ENCODE measurements at regions of chr17 and their contacts with region 1.

Region 1: DNA sequence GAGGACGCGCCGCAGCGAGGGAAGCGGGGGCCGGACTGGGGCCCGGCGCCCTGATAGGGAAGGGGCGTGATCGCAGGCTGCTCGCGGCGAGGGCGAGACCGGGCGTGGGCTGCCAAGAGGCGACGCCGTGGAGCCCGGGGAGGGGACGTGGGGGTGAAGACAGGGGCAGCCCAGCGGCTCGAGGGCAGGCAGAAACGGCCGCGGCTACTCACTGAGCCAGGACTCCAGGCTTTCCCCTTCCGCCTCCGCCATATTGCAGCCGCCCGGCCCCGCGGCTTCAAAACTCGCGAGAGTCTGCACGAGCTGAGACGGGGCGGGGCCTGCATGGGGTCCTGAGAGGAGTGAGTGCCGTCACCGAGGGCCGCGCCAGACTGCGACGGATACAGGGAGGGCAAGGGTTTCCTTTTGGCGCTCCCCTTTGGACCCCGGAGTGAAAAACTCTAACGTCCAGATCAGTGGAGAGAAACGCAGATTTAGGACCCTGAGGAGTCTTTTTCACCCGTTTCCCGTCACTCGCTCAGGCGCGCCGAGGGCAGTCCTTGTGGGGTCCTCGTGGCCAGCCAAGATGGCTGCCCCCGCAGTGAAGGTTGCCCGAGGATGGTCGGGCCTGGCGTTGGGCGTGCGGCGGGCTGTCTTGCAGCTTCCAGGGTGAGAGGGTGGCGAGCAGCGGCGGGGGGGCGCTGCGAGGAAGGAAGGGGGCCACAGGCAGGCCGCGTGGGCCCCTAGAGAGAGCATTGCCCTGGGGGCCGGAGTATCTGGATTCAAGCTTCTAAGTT is at the starts of genes GGA3 and MRPS7:
- DNase-seq: peak; percentile 94
- H3K4me3 Mint-ChIP-seq: peak within 1 kb of the TSS; percentile 96
- H3K27ac Mint-ChIP-seq: peak within 1 kb of the TSS; percentile 97
- H3K4me1 Mint-ChIP-seq: peaks cover 49% of the 10 kb centered on the region
- H3K27me3 Mint-ChIP-seq: no peaks in the 10 kb centered on the region
- total RNA-seq, gene GGA3: 93.4 and 94.3 TPM in 2 replicates
- total RNA-seq, gene MRPS7: 126 and 130 TPM in 2 replicates

Region 2: DNA sequence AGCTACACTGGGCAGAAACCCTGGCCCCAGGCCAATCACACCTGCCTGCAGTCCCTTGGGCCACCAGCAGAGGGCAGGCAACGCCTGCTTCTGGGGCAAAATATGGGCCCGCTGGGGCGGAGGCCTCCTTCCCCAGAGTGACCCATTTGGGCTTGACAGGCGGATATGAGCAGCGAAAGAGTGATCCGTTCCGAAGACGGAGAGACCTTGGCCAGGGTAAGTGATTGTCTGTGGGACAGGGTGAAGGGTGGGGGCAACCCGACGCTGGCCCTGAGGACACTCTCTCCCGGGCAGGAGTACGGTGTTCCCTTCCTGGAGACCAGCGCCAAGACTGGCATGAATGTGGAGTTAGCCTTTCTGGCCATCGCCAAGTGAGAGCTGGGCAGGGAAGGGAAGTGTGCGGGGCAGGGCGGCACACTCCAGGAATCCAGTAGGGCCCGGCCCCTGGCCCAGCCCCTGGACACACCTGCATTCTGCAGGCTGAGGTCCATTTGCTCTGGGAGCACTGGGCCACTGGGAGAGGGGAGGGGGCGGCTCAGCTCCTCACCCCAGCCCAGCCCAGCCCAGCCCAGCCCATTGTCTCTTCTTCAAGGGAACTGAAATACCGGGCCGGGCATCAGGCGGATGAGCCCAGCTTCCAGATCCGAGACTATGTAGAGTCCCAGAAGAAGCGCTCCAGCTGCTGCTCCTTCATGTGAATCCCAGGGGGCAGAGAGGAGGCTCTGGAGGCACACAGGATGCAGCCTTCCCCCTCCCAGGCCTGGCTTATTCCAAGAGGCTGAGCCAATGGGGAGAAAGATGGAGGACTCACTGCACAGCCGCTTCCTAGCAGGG is 516.6 kb before region 1 on chr17:
- intact Hi-C with region 1: no loop called
- DNase-seq: peak; percentile 78
- H3K4me3 Mint-ChIP-seq: peak overlapping the region; percentile 39
- H3K27ac Mint-ChIP-seq: peak overlapping the region; percentile 65
- H3K4me1 Mint-ChIP-seq: peaks cover 71% of the 10 kb centered on the region
- H3K27me3 Mint-ChIP-seq: no peaks in the 10 kb centered on the region

Region 3: DNA sequence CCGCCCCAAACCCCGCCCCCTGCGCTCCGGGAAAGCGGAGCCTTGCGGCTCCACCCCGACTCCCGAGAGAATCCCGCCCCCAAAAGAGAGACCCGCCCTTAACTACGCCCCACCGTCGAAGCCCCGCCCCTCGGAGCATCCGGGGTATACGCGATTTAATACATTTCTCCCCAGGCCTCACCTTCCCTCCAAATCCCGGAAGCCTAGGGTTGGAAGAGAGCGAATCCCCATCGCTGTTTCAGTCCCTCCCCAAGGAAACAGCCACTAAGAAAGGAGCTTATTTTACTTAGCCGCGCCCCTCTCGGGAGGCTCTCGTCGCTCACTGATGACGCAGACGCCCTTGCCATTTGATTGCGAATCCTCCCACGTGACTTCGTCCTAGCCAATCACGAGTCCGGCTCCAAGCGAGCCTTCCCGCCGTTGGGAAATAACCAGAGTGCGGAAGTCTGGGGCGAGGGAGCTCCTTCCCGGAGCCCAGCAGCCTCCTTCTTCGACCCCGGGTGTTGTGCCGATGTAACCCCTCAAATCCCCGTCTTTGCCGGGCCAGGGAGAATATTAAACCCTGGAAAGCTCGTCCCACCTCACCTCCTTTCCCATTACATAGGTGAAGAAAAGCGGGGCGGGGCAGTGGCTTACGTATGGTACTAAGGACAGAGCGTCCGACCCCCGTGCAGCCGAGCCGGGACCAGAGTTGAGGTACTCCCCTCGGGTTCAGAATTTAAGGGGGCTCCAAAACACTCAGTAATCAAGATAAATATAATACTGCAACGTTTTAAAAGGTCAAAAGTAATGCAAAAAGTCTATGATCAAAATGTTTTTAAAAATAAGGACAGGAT is 388.3 kb before region 1 on chr17:
- intact Hi-C with region 1: loop called (anchors 10 kb)
- DNase-seq: peak; percentile 98
- H3K4me3 Mint-ChIP-seq: peak overlapping the region; percentile 89
- H3K27ac Mint-ChIP-seq: peak overlapping the region; percentile 87
- H3K4me1 Mint-ChIP-seq: peaks cover 31% of the 10 kb centered on the region
- H3K27me3 Mint-ChIP-seq: peaks cover 5% of the 10 kb centered on the region

Region 4: GRCh38 chr17:75046582-75047289 is 214.8 kb before region 1 on chr17 and contains the starts of genes ATP5PD and KCTD2:
- intact Hi-C with region 1: loop called (anchors 5 kb)
- DNase-seq: peak; percentile 93
- H3K4me3 Mint-ChIP-seq: peak within 1 kb of the TSS; percentile 100
- H3K27ac Mint-ChIP-seq: peak within 1 kb of the TSS; percentile 98
- H3K4me1 Mint-ChIP-seq: peaks cover 35% of the 10 kb centered on the region
- H3K27me3 Mint-ChIP-seq: no peaks in the 10 kb centered on the region
- total RNA-seq, gene ATP5PD: 152 and 165 TPM in 2 replicates
- total RNA-seq, gene KCTD2: 21.2 and 22.6 TPM in 2 replicates

Region 5: DNA sequence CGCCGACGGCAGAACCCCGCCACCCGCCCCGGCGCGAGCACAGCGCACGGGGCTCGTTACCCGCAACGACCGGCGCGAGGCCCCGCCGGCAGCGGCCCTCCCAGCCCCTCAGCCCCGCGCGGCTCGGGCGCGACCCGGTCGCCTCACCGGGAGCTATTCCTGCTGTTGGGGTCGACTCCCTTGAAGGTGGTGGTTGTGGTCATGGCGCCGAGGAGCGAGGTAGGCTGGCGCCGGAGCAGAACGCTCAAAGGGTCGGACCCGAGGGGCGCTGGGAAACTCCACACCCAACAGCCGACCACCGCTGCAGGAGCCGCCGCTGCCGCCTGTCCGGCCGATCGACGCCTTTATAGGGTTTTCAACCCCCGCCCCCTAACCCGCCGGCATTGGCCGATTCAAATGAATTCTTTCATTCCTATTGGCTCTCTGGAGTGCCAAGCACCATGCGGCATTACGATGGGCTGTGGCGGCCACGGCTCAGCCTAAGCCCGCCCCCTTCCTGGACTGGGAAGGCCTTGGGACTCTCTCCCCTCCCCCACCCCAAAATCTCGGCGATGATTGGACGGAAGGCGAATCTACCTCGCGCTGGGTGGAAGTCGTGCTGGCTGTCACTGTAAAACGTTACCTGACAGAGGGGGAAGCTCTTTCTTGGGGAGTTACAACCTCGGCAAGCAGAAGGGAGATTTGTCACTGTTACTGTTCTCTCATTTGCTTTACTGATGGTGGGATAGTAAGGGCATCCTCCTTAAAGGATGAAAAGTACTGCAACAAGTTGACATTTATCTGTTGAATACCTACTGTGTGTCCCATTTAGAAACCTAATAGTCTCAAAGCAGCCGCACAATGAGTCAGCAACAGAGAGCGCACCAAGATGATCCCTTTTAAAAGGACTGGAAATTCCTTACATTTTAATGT is 107.1 kb before region 1 on chr17 and contains the start of gene JPT1:
- intact Hi-C with region 1: loop called (anchors 1 kb)
- DNase-seq: peak; percentile 97
- H3K4me3 Mint-ChIP-seq: peak within 1 kb of the TSS; percentile 97
- H3K27ac Mint-ChIP-seq: peak within 1 kb of the TSS; percentile 93
- H3K4me1 Mint-ChIP-seq: peaks cover 34% of the 10 kb centered on the region
- H3K27me3 Mint-ChIP-seq: no peaks in the 10 kb centered on the region
- total RNA-seq, gene JPT1: 271 and 299 TPM in 2 replicates

Region 6: GRCh38 chr17:75205037-75205792 is 56.3 kb before region 1 on chr17 and contains the start of gene NUP85:
- intact Hi-C with region 1: loop called (anchors 1 kb)
- DNase-seq: peak; percentile 89
- H3K4me3 Mint-ChIP-seq: peak within 1 kb of the TSS; percentile 98
- H3K27ac Mint-ChIP-seq: peak within 1 kb of the TSS; percentile 99
- H3K4me1 Mint-ChIP-seq: peaks cover 23% of the 10 kb centered on the region
- H3K27me3 Mint-ChIP-seq: no peaks in the 10 kb centered on the region
- total RNA-seq, gene NUP85: 122 and 129 TPM in 2 replicates

Region 7: DNA sequence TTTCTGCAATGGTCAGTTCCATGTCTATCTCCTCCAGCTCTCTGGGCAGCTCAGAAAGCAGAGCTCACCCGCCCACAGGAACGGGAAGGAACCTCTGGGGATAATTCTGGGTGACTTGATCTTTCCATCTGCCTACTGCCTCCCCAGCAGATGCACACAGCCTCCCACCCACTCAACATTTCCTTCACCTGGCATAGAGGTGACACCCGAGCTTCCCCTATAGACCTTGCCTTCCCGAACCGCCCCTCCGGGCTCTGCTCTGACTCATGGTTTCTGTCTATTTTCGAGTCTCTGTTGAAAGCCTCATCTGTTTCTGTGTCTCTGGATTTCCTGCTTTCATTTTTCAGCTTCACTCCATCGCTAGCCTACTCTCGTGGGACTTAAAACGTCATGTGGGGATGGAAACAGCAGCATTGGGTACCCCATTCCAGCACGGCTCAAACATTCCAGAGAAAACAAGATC is 11.5 kb before region 1 on chr17:
- intact Hi-C with region 1: loop called (anchors 1 kb)
- DNase-seq: peak; percentile 64
- H3K4me3 Mint-ChIP-seq: peak overlapping the region; percentile 77
- H3K27ac Mint-ChIP-seq: peak overlapping the region; percentile 92
- H3K4me1 Mint-ChIP-seq: peaks cover 63% of the 10 kb centered on the region
- H3K27me3 Mint-ChIP-seq: no peaks in the 10 kb centered on the region

Region 8: DNA sequence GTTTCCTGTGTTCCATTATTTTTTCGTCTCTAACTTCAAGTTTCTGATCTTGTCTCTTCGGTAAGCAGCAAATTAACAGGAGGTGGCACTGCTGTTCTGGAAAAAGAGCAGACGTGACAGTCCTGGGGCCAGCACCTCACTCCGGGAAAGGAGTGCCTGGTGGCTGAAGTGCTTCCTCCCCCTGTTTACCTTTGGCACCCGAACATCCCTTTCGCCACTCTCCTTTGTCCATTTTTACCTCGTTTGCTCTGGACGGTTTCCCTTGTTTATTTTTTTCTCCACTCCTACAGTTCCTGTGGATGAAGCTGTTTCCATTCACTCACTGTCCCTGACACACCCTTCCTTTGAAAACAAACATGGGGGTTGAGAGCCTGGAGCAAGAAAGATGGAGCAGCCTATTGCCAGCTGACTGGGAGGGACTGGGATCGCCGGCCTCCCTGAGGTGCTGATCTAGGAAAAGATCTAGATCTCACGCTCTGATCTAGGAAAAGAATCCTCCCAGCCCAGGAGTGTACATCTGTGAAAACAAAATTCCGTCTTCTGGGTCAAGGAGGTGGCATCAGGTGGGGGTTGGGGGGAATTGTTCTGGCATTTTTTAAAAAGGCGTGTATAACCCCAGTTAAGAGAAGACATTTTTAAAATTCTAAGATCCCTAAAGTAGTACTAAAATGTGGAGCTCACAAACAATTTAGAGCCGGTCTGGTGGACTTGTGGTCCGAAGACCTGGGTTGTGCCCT is 418.4 kb after region 1 on chr17:
- intact Hi-C with region 1: loop called (anchors 10 kb)
- DNase-seq: no peak
- H3K4me3 Mint-ChIP-seq: no peak overlapping the region
- H3K27ac Mint-ChIP-seq: no peak overlapping the region
- H3K4me1 Mint-ChIP-seq: peaks cover 13% of the 10 kb centered on the region
- H3K27me3 Mint-ChIP-seq: no peaks in the 10 kb centered on the region